ENCODE measurements at regions of chr12 and their contacts with region 1.

Region 1: GRCh38 chr12:17853054-17853453 is 236.9 kb downstream of the RERGL start:
- DNase-seq: no peak
- ATAC-seq: no peak
- H3K4me3 ChIP-seq: no peak overlapping the region
- H3K27ac ChIP-seq: no peak overlapping the region
- H3K4me1 ChIP-seq: no peaks in the 10 kb centered on the region
- H3K27me3 ChIP-seq: no peaks in the 10 kb centered on the region
- CTCF ChIP-seq: no peak
- EP300 ChIP-seq: no peak
- POLR2A ChIP-seq: no peak
- RAD21 ChIP-seq: no peak

Region 2: DNA sequence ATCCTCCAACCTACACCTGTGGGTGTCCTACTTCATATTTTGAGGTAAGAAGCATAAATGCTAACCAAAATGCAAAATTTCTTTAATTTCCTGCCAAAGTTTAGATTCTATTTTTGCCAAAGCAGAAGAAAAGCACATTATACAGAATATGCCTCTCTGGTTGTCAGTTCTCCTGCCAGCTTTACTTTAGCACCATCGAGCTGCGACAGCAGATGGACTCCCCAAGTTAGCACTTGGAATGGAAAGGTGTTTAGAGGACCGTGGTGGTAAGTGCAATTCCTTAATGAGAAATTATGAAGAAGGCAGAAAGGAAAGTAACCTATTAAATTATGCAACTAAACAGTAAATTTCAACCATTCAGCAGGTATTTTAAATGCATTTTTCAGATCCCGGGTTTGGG is 89.7 kb before region 1 on chr12:
- CTCF ChIA-PET with region 1: no interaction called
- POLR2A ChIA-PET with region 1: no interaction called
- RAD21 ChIA-PET with region 1: no interaction called
- SMC1A ChIA-PET with region 1: interaction called, 11 read pairs
- in situ Hi-C with region 1: loop called (anchors 5 kb)
- intact Hi-C with region 1: loop called (anchors 1 kb)
- DNase-seq: no peak
- ATAC-seq: no peak
- H3K4me3 ChIP-seq: no peak overlapping the region
- H3K27ac ChIP-seq: no peak overlapping the region
- H3K4me1 ChIP-seq: no peaks in the 10 kb centered on the region
- H3K27me3 ChIP-seq: no peaks in the 10 kb centered on the region
- CTCF ChIP-seq: no peak
- EP300 ChIP-seq: no peak
- POLR2A ChIP-seq: no peak
- RAD21 ChIP-seq: no peak

Region 3: GRCh38 chr12:17793854-17794253 is 59.2 kb before region 1 on chr12:
- CTCF ChIA-PET with region 1: no interaction called
- POLR2A ChIA-PET with region 1: no interaction called
- RAD21 ChIA-PET with region 1: no interaction called
- SMC1A ChIA-PET with region 1: no interaction called
- in situ Hi-C with region 1: no loop called
- intact Hi-C with region 1: no loop called
- DNase-seq: no peak
- ATAC-seq: no peak
- H3K4me3 ChIP-seq: no peak overlapping the region
- H3K27ac ChIP-seq: no peak overlapping the region
- H3K4me1 ChIP-seq: no peaks in the 10 kb centered on the region
- H3K27me3 ChIP-seq: no peaks in the 10 kb centered on the region
- CTCF ChIP-seq: no peak
- EP300 ChIP-seq: no peak
- POLR2A ChIP-seq: no peak
- RAD21 ChIP-seq: no peak

Region 4: DNA sequence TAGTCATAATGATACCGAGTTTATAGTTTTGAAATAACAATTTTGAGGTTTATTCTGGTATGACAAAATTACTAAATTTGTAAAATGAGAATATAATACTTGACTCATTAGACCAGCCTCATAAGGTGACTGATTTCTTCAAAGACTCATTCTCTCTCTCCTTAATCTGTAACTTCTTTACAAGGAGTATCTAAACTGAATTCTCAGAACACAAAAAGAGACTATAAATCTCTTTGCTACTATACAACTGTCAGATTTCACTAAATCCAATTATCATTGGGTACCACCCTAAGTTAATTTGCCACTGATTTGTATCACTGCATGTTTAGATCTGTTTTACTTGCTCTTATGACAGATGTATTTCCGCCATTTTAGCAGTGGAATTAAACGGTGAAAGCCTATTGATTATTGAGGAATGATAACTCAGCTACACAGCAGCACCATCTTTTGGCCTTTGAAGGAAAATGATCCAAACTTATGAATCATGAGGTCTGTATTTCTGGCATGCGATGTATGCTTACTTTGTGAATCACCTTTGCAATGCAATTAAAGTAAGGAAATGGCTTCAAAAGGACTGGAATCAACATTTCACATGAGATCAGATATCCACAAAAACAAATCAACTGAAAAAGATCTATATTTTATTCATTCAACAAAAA is 75.8 kb after region 1 on chr12:
- CTCF ChIA-PET with region 1: no interaction called
- POLR2A ChIA-PET with region 1: no interaction called
- RAD21 ChIA-PET with region 1: no interaction called
- SMC1A ChIA-PET with region 1: no interaction called
- in situ Hi-C with region 1: no loop called
- intact Hi-C with region 1: no loop called
- DNase-seq: no peak
- ATAC-seq: no peak
- H3K4me3 ChIP-seq: no peak overlapping the region
- H3K27ac ChIP-seq: no peak overlapping the region
- H3K4me1 ChIP-seq: no peaks in the 10 kb centered on the region
- H3K27me3 ChIP-seq: no peaks in the 10 kb centered on the region
- CTCF ChIP-seq: no peak
- EP300 ChIP-seq: no peak
- POLR2A ChIP-seq: no peak
- RAD21 ChIP-seq: no peak

Measured in GM12878 (cell line).